ENCODE measurements at regions of chr19 and their contacts with region 1.

Region 1: GRCh38 chr19:42576241-42576640 is 18.5 kb downstream of the CEACAM8 start:
- DNase-seq: no peak
- H3K4me3 Mint-ChIP-seq: no peak overlapping the region
- H3K27ac Mint-ChIP-seq: no peak overlapping the region
- H3K4me1 Mint-ChIP-seq: no peaks in the 10 kb centered on the region
- H3K27me3 Mint-ChIP-seq: peaks cover 72% of the 10 kb centered on the region
- CTCF ChIP-seq: no peak

Region 2: DNA sequence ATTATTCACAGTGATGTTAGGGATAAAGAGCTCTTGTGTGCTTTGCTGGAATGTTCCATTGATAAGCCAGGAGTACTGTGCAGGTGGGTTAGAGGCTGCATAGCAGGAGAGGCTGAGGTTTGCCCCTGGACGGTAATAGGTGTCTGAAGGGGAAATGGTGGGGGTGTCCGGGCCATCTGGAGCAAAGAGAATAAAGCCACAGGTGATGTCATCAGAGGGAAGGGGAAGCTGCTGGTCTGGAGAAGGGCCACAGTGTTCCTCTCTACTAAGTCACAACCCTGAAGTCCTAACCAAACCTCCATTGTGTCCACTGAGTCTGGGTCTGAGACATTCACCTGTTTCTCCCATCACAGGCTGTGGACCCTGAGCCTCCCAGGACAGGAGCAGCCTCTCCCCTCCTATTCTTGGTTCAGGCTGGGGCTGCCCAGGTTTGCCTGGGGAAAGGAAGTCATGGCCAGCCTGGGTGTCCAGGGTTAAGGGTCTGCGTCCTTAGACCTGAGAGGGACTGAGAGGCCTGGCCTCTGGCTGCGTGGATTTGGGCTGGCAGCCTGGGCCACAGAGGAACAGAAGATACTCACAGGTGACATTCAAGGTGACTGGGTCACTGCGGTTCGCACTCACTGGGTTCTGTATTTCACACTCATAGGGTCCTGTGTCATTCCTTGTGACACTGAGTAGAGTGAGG is 54.8 kb before region 1 on chr19:
- CTCF ChIA-PET with region 1: no interaction called
- POLR2A ChIA-PET with region 1: no interaction called
- intact Hi-C with region 1: no loop called
- DNase-seq: no peak
- H3K4me3 Mint-ChIP-seq: no peak overlapping the region
- H3K27ac Mint-ChIP-seq: no peak overlapping the region
- H3K4me1 Mint-ChIP-seq: no peaks in the 10 kb centered on the region
- H3K27me3 Mint-ChIP-seq: no peaks in the 10 kb centered on the region
- CTCF ChIP-seq: no peak

Region 3: DNA sequence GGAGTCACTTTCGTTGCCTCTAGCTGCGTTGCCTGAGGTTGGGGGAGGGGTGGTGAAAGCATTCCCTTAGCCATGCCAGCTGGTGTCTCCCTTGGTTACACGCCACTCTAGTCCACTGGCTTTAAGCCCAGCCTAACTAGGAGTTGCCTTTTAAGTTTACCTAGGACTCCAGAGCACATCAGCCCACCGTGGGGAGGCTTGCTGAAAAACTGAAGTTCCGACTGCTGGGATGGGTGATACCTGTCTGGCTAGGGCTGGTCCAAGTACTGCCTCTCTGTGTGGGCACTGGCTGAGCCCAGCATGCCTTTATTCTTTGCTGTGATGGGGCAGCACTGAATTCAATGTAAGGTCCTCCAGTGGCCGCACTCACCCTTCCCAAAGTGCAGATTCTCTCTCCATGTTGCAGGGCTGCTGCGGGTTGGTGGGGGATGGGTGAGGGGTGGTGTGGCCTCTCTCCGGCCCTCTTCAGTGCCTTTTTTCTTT is 36.1 kb before region 1 on chr19:
- CTCF ChIA-PET with region 1: no interaction called
- POLR2A ChIA-PET with region 1: no interaction called
- intact Hi-C with region 1: no loop called
- DNase-seq: no peak
- H3K4me3 Mint-ChIP-seq: no peak overlapping the region
- H3K27ac Mint-ChIP-seq: no peak overlapping the region
- H3K4me1 Mint-ChIP-seq: no peaks in the 10 kb centered on the region
- H3K27me3 Mint-ChIP-seq: no peaks in the 10 kb centered on the region
- CTCF ChIP-seq: no peak

Region 4: DNA sequence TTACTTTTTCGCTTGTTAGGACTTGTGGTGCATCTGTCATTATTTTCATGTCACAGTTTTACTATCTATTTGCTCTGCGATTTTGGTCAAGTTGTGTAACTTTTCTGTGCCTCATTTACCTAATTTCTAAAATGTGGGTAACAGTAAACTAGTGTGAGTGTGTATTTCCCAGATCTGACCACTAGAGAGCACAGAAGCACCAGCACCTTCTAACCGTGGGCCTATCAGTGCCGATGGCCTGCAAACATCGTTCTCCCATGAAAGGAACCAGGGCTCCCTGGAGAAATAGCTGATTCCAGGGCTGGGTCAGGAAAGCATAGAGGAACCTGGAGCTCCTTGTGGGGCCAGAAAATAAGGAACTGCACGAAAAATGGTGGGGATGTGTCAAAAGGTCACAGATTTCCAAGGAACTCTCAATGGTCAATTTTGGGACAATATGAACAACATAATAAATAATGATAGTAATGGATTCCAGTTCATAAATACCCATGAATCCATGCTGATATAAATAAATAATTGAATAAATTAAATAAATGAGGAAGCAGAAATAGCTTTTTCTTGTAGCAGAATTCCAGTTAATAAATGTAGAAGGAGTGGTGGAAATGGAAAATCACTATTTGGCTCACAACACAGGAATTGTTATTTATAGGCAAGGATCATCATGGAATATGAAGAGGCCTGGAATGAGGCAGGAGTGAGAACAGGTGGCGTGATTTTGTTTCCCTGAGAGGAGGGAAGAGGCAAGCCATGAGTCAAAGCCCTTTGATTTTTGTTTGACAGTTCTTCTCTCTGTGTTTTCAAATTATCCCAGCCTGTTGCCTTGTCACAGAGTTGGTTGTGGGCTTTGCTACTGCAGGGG is 12.7 kb before region 1 on chr19:
- CTCF ChIA-PET with region 1: interaction called, 13 read pairs
- POLR2A ChIA-PET with region 1: no interaction called
- intact Hi-C with region 1: no loop called
- DNase-seq: peak; percentile 60
- H3K4me3 Mint-ChIP-seq: no peak overlapping the region
- H3K27ac Mint-ChIP-seq: no peak overlapping the region
- H3K4me1 Mint-ChIP-seq: peaks cover 10% of the 10 kb centered on the region
- H3K27me3 Mint-ChIP-seq: peaks cover 24% of the 10 kb centered on the region
- CTCF ChIP-seq: peak; percentile 56